OCI-LY7 (cell line): ENCODE measurements at regions of chr5 and their contacts with region 1.

Region 1: DNA sequence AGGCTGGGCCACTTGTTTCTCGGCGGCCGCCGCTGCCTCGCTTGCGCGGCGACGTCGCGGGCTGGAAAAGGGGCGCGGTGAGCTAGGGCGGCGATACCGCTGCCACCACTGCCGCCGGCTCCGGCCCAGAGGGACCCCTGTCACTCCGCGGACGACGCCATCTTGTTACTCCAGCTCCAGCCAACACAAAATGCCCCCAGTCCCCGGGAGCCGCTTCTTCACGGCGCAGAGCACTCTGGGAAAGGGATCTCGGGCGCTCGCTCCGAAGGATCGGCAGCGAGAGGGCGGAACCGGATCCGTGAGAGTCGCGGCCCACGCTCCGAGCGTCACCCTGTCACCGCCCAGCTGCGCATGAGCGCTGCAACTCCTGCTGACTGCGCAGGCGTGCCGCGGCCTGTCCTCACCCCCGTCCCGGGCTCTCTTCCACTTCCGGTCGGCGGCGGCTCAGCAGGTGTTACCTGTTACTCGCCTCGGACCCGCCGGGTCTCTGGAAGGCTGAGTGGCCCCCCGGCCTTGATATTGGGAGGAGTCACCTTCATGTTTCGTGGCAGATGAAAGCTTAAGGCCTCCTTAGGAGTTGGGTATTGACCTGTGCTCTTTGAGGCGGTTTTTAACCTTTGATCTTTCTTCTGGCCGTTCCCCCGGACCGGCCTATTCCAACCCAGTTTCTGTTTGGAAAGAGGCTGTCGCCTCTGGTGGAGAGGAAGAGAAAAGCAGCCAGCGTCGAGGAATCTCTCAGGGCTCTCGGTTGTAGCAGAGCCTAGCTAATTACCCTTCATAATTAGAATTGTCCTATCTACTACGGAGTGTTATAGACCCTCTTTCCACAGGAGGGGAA is at the start of gene CSNK1A1:
- DNase-seq: peak; percentile 99
- H3K4me3 ChIP-seq: peak within 1 kb of the TSS; percentile 98
- H3K27ac ChIP-seq: peak within 1 kb of the TSS; percentile 83
- H3K4me1 ChIP-seq: peaks cover 32% of the 10 kb centered on the region
- CTCF ChIP-seq: peak; percentile 92
- total RNA-seq, gene CSNK1A1: 161 and 176 TPM in 2 replicates

Region 2: GRCh38 chr5:149951135-149951749 is 399.8 kb after region 1 on chr5:
- CTCF ChIA-PET with region 1: no interaction called
- POLR2A ChIA-PET with region 1: no interaction called
- intact Hi-C with region 1: no loop called
- DNase-seq: no peak
- H3K4me3 ChIP-seq: no peak overlapping the region
- H3K27ac ChIP-seq: no peak overlapping the region
- H3K4me1 ChIP-seq: no peaks in the 10 kb centered on the region
- CTCF ChIP-seq: 0 out of 2 replicates have a peak, but pooled peaks have one; percentile 30

Region 3: DNA sequence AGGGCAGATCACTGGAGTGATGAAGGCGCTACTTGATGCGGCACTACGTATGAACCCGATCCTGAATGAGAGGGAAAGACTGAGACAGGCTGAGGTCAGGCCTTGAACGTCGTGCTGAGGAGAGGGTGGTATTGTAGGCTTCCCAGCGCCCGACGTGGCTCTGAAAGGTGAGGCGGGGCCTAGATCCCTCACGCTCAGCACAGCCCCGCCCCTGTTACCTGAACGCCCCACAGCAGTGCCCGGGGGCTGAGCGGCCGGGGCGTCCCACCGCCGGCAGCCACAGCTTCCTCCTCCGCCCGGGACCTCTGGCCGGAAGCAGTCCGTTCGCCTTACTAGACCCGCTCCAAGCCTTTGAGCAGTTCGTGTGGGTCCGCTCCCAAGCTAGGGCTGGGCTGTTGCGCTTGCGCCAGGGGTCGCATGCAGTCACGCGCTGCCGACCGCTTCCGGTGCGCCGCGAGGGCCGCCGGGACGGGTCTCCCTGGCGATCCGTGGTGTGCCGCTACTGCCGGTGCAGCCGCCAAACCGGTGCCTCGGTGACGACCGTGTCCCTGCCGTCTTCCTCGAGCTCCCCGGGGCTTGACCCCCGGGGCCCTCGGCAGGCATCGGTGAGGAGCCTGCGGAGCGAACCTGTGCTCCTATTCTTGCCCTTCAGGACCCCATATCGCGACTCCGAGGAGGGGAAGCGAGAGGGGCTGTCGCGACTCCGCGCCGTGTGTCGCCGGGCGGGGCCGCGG is 449.0 kb after region 1 on chr5 and contains the starts of genes HMGXB3 and TIGD6:
- CTCF ChIA-PET with region 1: no interaction called
- POLR2A ChIA-PET with region 1: no interaction called
- intact Hi-C with region 1: loop called (anchors 5 kb)
- DNase-seq: peak; percentile 96
- H3K4me3 ChIP-seq: peak within 1 kb of the TSS; percentile 83
- H3K27ac ChIP-seq: peak within 1 kb of the TSS; percentile 66
- H3K4me1 ChIP-seq: peaks cover 27% of the 10 kb centered on the region
- CTCF ChIP-seq: no peak
- total RNA-seq, gene HMGXB3: 35.1 and 40.4 TPM in 2 replicates
- total RNA-seq, gene TIGD6: 3.4 and 5.4 TPM in 2 replicates